Activated CD4-positive, alpha-beta T cell treated with anti-CD3 and anti-CD28 coated beads for 36 hours (primary cell): ENCODE measurements at regions of chr12 and their contacts with region 1.

Region 1: GRCh38 chr12:122537021-122537420 is 10.0 kb downstream of the KNTC1 start:
- DNase-seq: no peak
- ATAC-seq: no peak
- H3K4me3 Mint-ChIP-seq: no peak overlapping the region
- H3K27ac Mint-ChIP-seq: no peak overlapping the region
- H3K4me1 Mint-ChIP-seq: peaks cover 3% of the 10 kb centered on the region
- H3K27me3 Mint-ChIP-seq: no peaks in the 10 kb centered on the region

Region 2: DNA sequence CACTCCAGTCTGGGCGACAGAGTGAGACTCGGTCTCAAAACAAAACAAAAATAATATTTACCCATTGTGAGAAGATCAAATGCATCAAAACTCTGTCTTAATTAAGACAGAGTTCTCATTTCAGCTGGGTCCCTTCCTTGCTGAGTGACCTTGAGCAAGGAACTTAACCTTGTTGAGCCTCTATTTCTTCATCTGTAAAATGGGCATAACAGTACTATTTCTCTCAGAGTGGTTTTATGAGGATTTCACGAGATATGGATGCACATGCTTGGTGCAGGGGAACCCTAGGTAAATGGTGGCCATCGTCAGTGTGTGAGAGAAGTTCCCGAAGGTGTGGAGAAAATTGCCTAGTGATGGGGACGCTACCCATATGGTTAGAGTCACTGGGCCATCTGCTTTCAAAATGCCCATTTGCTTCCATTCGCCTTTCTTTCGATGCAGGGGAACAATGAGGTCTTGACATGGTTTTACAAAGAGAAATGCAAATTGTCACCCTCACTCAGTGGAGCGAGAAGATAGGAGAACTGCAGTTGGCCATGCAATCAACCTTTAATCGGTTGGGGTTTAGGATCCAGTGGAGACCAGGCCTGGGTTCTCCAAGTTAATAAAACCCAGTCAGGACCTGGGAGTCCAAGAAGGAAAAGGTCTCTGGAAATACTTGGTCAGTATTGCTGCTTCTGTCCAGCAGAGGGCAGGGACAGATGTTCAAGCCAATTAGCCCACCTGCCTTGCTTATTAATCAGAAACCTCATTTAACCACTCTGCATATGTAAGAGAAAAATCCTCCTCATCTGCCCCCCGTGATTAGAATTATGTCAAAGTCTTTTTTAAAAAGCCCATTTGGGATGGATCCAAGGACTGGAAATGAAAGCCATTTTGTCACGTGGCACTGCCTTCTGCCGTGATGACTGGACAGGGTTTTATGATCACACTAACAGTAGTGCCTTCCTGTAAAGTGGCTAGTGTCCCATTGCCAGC is 581.5 kb before region 1 on chr12:
- CTCF ChIA-PET with region 1: no interaction called
- POLR2A ChIA-PET with region 1: no interaction called
- intact Hi-C with region 1: no loop called
- DNase-seq: no peak
- ATAC-seq: no peak
- H3K4me3 Mint-ChIP-seq: no peak overlapping the region
- H3K27ac Mint-ChIP-seq: no peak overlapping the region
- H3K4me1 Mint-ChIP-seq: no peaks in the 10 kb centered on the region
- H3K27me3 Mint-ChIP-seq: no peaks in the 10 kb centered on the region

Region 3: DNA sequence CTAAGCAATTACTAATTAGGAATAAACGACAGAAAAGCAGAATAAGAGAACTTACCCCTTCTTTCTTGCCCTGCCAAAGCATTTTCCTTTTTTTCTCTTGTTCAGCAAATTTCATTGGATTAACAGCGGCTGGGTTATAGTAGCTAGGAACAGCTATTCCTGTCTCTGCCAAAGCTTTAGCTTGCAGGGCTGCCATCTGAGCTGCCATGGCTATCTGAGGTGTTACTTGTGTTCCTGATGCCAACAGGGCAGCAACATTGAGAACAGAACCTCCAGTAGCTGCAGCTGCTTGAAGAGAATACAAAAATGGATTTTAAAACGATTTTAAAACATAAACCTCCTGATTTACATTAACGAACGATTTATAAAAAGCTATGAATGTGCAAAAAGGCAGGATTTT is 28.9 kb before region 1 on chr12:
- CTCF ChIA-PET with region 1: interaction called, 3 read pairs
- POLR2A ChIA-PET with region 1: interaction called, 12 read pairs
- intact Hi-C with region 1: no loop called
- DNase-seq: no peak
- ATAC-seq: no peak
- H3K4me3 Mint-ChIP-seq: no peak overlapping the region
- H3K27ac Mint-ChIP-seq: no peak overlapping the region
- H3K4me1 Mint-ChIP-seq: no peaks in the 10 kb centered on the region
- H3K27me3 Mint-ChIP-seq: no peaks in the 10 kb centered on the region

Region 4: GRCh38 chr12:122659519-122659918 is 122.5 kb after region 1 on chr12:
- CTCF ChIA-PET with region 1: no interaction called
- POLR2A ChIA-PET with region 1: no interaction called
- intact Hi-C with region 1: no loop called
- DNase-seq: no peak
- ATAC-seq: no peak
- H3K4me3 Mint-ChIP-seq: no peak overlapping the region
- H3K27ac Mint-ChIP-seq: no peak overlapping the region
- H3K4me1 Mint-ChIP-seq: no peaks in the 10 kb centered on the region
- H3K27me3 Mint-ChIP-seq: no peaks in the 10 kb centered on the region